ENCODE measurements at regions of chr13 and their contacts with region 1.

Region 1: GRCh38 chr13:46639033-46639981 is 86.3 kb downstream of the LRCH1 start:
- DNase-seq: peak; percentile 71
- ATAC-seq: peak; percentile 95
- H3K4me3 ChIP-seq: peak overlapping the region; percentile 41
- H3K27ac ChIP-seq: peak overlapping the region; percentile 56
- H3K4me1 ChIP-seq: peaks cover 20% of the 10 kb centered on the region
- H3K27me3 ChIP-seq: no peaks in the 10 kb centered on the region
- CTCF ChIP-seq: no peak
- EP300 ChIP-seq: peak; percentile 93 to 96
- POLR2A ChIP-seq: no peak
- RAD21 ChIP-seq: no peak

Region 2: GRCh38 chr13:46655377-46656180 is 16.3 kb after region 1 on chr13:
- CTCF ChIA-PET with region 1: interaction called, 8 read pairs
- POLR2A ChIA-PET with region 1: interaction called, 51 read pairs
- RAD21 ChIA-PET with region 1: interaction called, 7 read pairs
- SMC1A ChIA-PET with region 1: interaction called, 456 read pairs
- in situ Hi-C with region 1: no loop called
- intact Hi-C with region 1: no loop called
- DNase-seq: no peak
- ATAC-seq: peak; percentile 17
- H3K4me3 ChIP-seq: peak overlapping the region; percentile 9; the same call in 1 of the 2 replicates
- H3K27ac ChIP-seq: peak overlapping the region; percentile 67
- H3K4me1 ChIP-seq: peaks cover 29% of the 10 kb centered on the region
- H3K27me3 ChIP-seq: no peaks in the 10 kb centered on the region
- CTCF ChIP-seq: no peak
- EP300 ChIP-seq: no peak
- POLR2A ChIP-seq: no peak
- RAD21 ChIP-seq: no peak

Region 3: DNA sequence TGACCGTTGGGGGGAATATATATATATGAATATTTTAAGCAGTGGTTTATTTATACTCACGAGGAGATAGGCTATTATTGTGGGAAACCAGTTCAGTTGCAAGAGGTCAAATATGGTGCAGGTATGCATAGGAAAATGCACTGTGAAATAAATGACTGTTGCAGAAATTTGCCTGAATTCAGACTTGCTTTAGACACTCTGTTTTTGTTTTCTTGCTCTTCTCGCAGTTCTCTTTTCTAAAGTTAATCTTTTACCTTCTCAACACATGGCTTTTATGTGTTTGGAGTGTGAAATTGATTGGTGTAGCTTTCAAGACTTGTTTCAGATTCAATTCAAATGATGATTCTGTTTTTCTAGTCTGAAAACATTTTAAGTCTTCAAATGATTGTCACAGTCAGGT is 23.4 kb after region 1 on chr13:
- CTCF ChIA-PET with region 1: interaction called, 14 read pairs
- POLR2A ChIA-PET with region 1: interaction called, 51 read pairs
- RAD21 ChIA-PET with region 1: interaction called, 17 read pairs
- SMC1A ChIA-PET with region 1: interaction called, 456 read pairs
- in situ Hi-C with region 1: no loop called
- intact Hi-C with region 1: no loop called
- DNase-seq: no peak
- ATAC-seq: peak; percentile 70
- H3K4me3 ChIP-seq: no peak overlapping the region
- H3K27ac ChIP-seq: peak overlapping the region; percentile 51; the same call in 1 of the 2 replicates
- H3K4me1 ChIP-seq: peaks cover 47% of the 10 kb centered on the region
- H3K27me3 ChIP-seq: no peaks in the 10 kb centered on the region
- CTCF ChIP-seq: no peak
- EP300 ChIP-seq: peak in 1 of 2 experiments; percentile 59; a peak in 2 of 4 replicates
- POLR2A ChIP-seq: no peak
- RAD21 ChIP-seq: no peak